A673 (cell line): ENCODE measurements at regions of chr5 and their contacts with region 1.

Region 1: GRCh38 chr5:142290577-142291299 is 34.1 kb downstream of the SPRY4 start:
- DNase-seq: peak; percentile 98
- H3K4me3 ChIP-seq: no peak overlapping the region
- H3K27ac ChIP-seq: no peak overlapping the region
- H3K4me1 ChIP-seq: peaks cover 35% of the 10 kb centered on the region
- H3K27me3 ChIP-seq: no peaks in the 10 kb centered on the region
- CTCF ChIP-seq: no peak

Region 2: GRCh38 chr5:142167458-142167857 is 123.3 kb before region 1 on chr5:
- CTCF ChIA-PET with region 1: no interaction called
- POLR2A ChIA-PET with region 1: no interaction called
- intact Hi-C with region 1: no loop called
- DNase-seq: no peak
- H3K4me3 ChIP-seq: no peak overlapping the region
- H3K27ac ChIP-seq: no peak overlapping the region
- H3K4me1 ChIP-seq: peaks cover 9% of the 10 kb centered on the region
- H3K27me3 ChIP-seq: no peaks in the 10 kb centered on the region
- CTCF ChIP-seq: peak; percentile 41

Region 3: DNA sequence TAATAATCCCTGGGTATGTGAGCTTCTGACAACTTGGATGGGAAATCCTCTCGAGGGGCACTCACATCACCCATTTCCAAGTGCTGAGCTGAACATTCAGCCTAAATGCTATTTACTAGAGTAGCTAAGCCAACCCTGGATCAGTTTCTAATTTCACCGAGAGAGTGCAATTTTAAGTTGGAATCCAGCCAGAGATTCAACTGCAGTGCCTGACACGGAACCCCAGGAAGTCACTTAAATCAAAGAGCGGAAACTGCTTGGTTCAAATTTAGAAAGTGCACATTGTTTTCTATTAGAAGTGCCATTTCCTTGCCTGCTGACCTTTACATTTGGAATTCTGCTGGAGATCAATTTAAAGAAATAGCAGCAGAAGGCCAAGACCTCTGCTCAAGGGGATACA is 25.3 kb after region 1 on chr5:
- CTCF ChIA-PET with region 1: no interaction called
- POLR2A ChIA-PET with region 1: no interaction called
- intact Hi-C with region 1: loop called (anchors 2 kb)
- DNase-seq: peak; percentile 98
- H3K4me3 ChIP-seq: peak overlapping the region; percentile 18
- H3K27ac ChIP-seq: peak overlapping the region; percentile 65
- H3K4me1 ChIP-seq: peaks cover 78% of the 10 kb centered on the region
- H3K27me3 ChIP-seq: no peaks in the 10 kb centered on the region
- CTCF ChIP-seq: no peak

Region 4: GRCh38 chr5:142356716-142357473 is 66.2 kb after region 1 on chr5:
- CTCF ChIA-PET with region 1: interaction called, 11 read pairs
- POLR2A ChIA-PET with region 1: no interaction called
- intact Hi-C with region 1: no loop called
- DNase-seq: peak; percentile 98
- H3K4me3 ChIP-seq: peak overlapping the region; percentile 44
- H3K27ac ChIP-seq: peak overlapping the region; percentile 99
- H3K4me1 ChIP-seq: peaks cover 60% of the 10 kb centered on the region
- H3K27me3 ChIP-seq: no peaks in the 10 kb centered on the region
- CTCF ChIP-seq: no peak